Activated CD4-positive, alpha-beta memory T cell treated with anti-CD3 and anti-CD28 coated beads for 36 hours (primary cell): ENCODE measurements at regions of chr2 and their contacts with region 1.

Region 1: DNA sequence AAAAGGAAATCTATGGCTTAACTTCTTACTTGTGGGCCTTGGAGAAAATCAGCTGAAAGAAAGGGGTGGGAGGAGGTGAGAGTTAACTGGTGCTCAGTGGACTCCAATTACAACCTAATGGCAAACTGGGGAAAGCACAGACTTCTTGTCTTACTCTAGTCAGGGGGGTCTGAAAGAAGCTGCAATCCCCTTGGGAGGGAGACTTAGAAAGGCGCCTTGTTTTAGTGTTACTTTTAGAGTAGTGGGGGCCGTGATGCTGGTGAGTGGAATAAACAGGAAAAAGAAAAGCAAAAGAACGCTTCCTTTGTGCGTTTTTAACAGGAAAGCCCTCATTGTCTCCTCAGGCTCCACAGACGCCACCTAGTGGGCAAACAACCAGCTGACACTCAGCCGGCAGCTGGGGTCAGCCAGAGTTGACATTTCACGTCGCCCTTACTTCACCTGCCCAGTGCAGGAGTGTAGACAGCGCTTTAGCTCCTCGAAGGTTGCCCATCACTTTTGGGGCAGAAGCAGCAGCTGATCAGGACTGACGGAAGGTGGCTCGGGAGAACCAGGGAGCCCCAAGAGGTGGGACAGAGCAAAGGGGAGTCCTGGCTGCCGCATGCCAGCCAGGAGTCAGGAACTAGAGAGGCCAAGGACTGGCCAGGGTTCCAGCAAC is 55.9 kb upstream of the GORASP2 start:
- DNase-seq: peak; percentile 85
- H3K4me3 Mint-ChIP-seq: peak overlapping the region; percentile 44
- H3K27ac Mint-ChIP-seq: no peak overlapping the region
- H3K4me1 Mint-ChIP-seq: peaks cover 11% of the 10 kb centered on the region
- H3K27me3 Mint-ChIP-seq: no peaks in the 10 kb centered on the region

Region 2: GRCh38 chr2:170324640-170325046 is 548.5 kb before region 1 on chr2:
- CTCF ChIA-PET with region 1: interaction called, 18 read pairs
- POLR2A ChIA-PET with region 1: no interaction called
- intact Hi-C with region 1: no loop called
- DNase-seq: peak; percentile 41
- H3K4me3 Mint-ChIP-seq: no peak overlapping the region
- H3K27ac Mint-ChIP-seq: no peak overlapping the region
- H3K4me1 Mint-ChIP-seq: no peaks in the 10 kb centered on the region
- H3K27me3 Mint-ChIP-seq: peaks cover 7% of the 10 kb centered on the region

Region 3: GRCh38 chr2:170689481-170689880 is 183.7 kb before region 1 on chr2:
- CTCF ChIA-PET with region 1: no interaction called
- POLR2A ChIA-PET with region 1: no interaction called
- intact Hi-C with region 1: no loop called
- DNase-seq: no peak
- H3K4me3 Mint-ChIP-seq: no peak overlapping the region
- H3K27ac Mint-ChIP-seq: no peak overlapping the region
- H3K4me1 Mint-ChIP-seq: no peaks in the 10 kb centered on the region
- H3K27me3 Mint-ChIP-seq: peaks cover 7% of the 10 kb centered on the region

Region 4: DNA sequence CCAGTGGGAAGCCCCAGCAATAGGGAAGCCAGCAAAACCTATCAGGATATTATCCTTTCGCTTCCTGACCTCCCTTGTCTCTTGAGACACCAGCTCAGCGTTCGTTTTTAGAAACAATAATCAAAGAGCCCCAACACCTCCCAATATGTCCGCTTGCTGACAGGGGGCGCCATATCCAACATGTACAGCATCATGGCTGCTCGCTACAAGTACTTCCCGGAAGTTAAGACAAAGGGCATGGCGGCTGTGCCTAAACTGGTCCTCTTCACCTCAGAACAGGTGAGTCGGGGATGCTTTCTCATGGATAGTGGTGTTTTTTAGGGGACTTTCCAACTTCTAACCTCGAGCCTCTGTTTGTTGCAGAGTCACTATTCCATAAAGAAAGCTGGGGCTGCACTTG is 27.8 kb before region 1 on chr2:
- CTCF ChIA-PET with region 1: interaction called, 30 read pairs
- POLR2A ChIA-PET with region 1: no interaction called
- intact Hi-C with region 1: no loop called
- DNase-seq: peak; percentile 42
- H3K4me3 Mint-ChIP-seq: no peak overlapping the region
- H3K27ac Mint-ChIP-seq: no peak overlapping the region
- H3K4me1 Mint-ChIP-seq: peaks cover 15% of the 10 kb centered on the region
- H3K27me3 Mint-ChIP-seq: peaks cover 6% of the 10 kb centered on the region

Region 5: DNA sequence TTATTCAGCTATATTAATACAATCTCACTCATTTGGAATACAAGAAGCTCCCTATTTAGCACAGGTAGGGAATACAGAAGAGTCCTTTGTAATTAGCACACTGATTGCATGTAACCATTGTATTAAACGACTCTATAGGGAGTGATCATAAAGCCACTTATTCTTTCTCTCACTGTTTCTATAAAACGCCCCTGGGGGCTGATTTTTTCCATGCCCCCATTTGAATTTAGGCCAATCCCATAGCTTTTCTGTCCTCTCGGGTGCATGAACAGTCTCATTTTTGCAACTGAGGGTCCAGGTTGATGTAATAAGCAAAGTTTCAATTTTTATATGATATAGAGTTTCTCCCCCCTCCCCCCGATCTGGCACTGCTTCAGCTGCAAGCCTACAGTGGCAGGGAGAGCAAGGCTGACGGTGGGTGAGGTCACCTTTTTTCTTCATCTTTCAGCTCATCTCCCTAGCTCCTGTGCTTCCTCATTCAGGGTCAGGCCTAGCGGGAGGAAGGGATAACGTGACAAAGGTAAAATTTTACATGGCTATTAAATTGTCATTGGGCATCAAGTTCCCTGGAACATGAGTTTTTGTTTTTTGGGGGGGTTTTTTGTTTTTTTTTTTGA is 10.8 kb before region 1 on chr2:
- CTCF ChIA-PET with region 1: interaction called, 31 read pairs
- POLR2A ChIA-PET with region 1: no interaction called
- intact Hi-C with region 1: no loop called
- DNase-seq: no peak
- H3K4me3 Mint-ChIP-seq: no peak overlapping the region
- H3K27ac Mint-ChIP-seq: no peak overlapping the region
- H3K4me1 Mint-ChIP-seq: no peaks in the 10 kb centered on the region
- H3K27me3 Mint-ChIP-seq: no peaks in the 10 kb centered on the region

Region 6: DNA sequence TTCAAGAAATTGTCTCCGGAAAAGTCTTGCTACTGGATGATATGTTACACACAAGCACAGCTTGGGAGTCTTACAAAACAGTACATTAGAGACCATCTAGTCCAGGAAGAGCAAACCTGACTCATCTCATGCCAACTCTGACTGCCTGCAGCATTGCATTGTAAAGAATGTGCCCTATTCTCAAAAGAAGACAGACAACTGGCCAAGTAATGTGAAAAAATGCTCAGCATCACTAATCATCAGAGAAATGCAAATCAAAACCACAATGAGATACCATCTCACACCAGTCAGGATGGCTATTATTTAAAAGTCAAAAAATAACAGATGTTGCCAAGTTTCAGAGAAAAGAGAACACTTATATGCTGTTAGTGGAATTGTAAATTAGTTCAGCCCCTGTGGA is 13.2 kb after region 1 on chr2:
- CTCF ChIA-PET with region 1: interaction called, 18 read pairs
- POLR2A ChIA-PET with region 1: no interaction called
- intact Hi-C with region 1: no loop called
- DNase-seq: no peak
- H3K4me3 Mint-ChIP-seq: no peak overlapping the region
- H3K27ac Mint-ChIP-seq: no peak overlapping the region
- H3K4me1 Mint-ChIP-seq: no peaks in the 10 kb centered on the region
- H3K27me3 Mint-ChIP-seq: peaks cover 2% of the 10 kb centered on the region